CD8-positive, alpha-beta T cell (primary cell): ENCODE measurements at regions of chr1 and their contacts with region 1.

Region 1: DNA sequence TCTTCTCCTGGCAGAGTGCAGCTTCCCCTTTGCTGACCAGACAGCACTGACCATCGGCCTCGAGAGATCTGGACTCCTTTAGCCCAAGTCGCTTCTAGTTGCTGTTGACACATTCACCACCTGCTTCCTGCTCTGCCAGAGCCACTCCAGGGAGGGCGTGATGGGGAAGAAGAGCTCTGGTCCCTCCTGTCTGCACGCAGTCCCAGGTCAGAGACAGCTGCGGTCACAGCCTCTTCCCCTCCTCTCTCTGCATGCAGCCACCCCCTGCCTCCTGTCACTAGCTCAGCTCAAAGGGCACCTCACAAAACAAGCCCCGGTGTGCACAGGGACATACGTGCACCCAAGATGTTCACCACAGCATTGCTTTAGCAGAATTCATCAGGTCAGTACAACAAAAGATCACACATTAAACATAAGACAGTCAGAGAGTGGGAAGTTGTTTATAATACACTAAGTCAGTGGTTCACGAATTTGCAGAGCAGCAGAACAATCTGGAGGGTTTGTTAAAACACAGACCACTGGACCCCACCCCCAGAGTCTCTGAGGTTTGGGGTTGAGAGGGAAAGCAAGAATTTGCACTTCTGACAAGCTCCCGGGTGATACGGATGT is 132.9 kb downstream of the SYF2 start:
- DNase-seq: peak; percentile 8 to 82 (median 52)
- ATAC-seq: peak; percentile 50
- H3K4me3 ChIP-seq: peak overlapping the region; percentile 21 to 32
- H3K4me3 Mint-ChIP-seq: peak overlapping the region; percentile 71
- H3K27ac ChIP-seq: peak overlapping the region; percentile 19 to 60
- H3K27ac Mint-ChIP-seq: peak overlapping the region; percentile 86
- H3K4me1 ChIP-seq: peaks cover 73% of the 10 kb centered on the region
- H3K4me1 Mint-ChIP-seq: peaks cover 74% of the 10 kb centered on the region
- H3K27me3 ChIP-seq: no peaks in the 10 kb centered on the region
- H3K27me3 Mint-ChIP-seq: no peaks in the 10 kb centered on the region
- CTCF ChIP-seq: no peak

Region 2: GRCh38 chr1:24769656-24770651 is 329.5 kb before region 1 on chr1:
- CTCF ChIA-PET with region 1: no interaction called
- POLR2A ChIA-PET with region 1: no interaction called
- intact Hi-C with region 1: no loop called
- DNase-seq: no peak
- ATAC-seq: no peak
- H3K4me3 ChIP-seq: no peak overlapping the region
- H3K4me3 Mint-ChIP-seq: no peak overlapping the region
- H3K27ac ChIP-seq: no peak overlapping the region
- H3K27ac Mint-ChIP-seq: no peak overlapping the region
- H3K4me1 ChIP-seq: no peaks in the 10 kb centered on the region
- H3K4me1 Mint-ChIP-seq: no peaks in the 10 kb centered on the region
- H3K27me3 ChIP-seq: no peaks in the 10 kb centered on the region
- H3K27me3 Mint-ChIP-seq: no peaks in the 10 kb centered on the region
- CTCF ChIP-seq: no peak

Region 3: GRCh38 chr1:24847995-24848881 is 251.2 kb before region 1 on chr1:
- CTCF ChIA-PET with region 1: interaction called, 41 read pairs
- POLR2A ChIA-PET with region 1: interaction called, 3 read pairs
- intact Hi-C with region 1: loop called (anchors 1 kb)
- DNase-seq: peak; percentile 82 to 96 (median 91)
- ATAC-seq: peak; percentile 92
- H3K4me3 ChIP-seq: peak overlapping the region; percentile 44 to 58
- H3K4me3 Mint-ChIP-seq: peak overlapping the region; percentile 63
- H3K27ac ChIP-seq: peak overlapping the region; percentile 11 to 63
- H3K27ac Mint-ChIP-seq: peak overlapping the region; percentile 79
- H3K4me1 ChIP-seq: peaks cover 19% of the 10 kb centered on the region
- H3K4me1 Mint-ChIP-seq: peaks cover 16% of the 10 kb centered on the region
- H3K27me3 ChIP-seq: no peaks in the 10 kb centered on the region
- H3K27me3 Mint-ChIP-seq: no peaks in the 10 kb centered on the region
- CTCF ChIP-seq: peak; percentile 84

Region 4: DNA sequence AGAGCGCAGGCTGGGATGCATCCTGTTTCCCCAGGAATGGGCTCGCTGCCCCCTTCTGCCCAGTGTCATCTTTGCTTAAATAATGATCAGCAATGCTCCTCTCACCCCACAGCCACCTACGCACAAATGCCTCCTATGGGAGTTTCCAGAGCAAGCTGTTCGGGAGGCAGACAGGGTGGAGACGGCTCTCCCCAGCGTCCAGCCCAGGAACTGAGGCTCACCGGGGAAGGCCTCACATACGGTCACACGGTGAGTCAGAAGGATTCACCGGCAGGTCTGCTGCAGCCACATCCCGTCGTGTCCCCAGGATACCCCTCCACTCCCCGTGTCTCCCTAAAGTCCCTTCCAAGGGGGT is 129.1 kb before region 1 on chr1:
- CTCF ChIA-PET with region 1: interaction called, 53 read pairs
- POLR2A ChIA-PET with region 1: interaction called, 17 read pairs
- intact Hi-C with region 1: no loop called
- DNase-seq: peak in 1 of 9 experiments; percentile 11
- ATAC-seq: no peak
- H3K4me3 ChIP-seq: peak overlapping the region in 1 of 2 experiments; percentile 20
- H3K4me3 Mint-ChIP-seq: peak overlapping the region; percentile 35
- H3K27ac ChIP-seq: peak overlapping the region in 1 of 2 experiments; percentile 23
- H3K27ac Mint-ChIP-seq: peak overlapping the region; percentile 95
- H3K4me1 ChIP-seq: peaks cover 66% of the 10 kb centered on the region
- H3K4me1 Mint-ChIP-seq: peaks cover 65% of the 10 kb centered on the region
- H3K27me3 ChIP-seq: peaks cover 0 to 2% of the 10 kb centered on the region in 2 experiments
- H3K27me3 Mint-ChIP-seq: no peaks in the 10 kb centered on the region
- CTCF ChIP-seq: no peak

Region 5: GRCh38 chr1:25042331-25043227 is 56.9 kb before region 1 on chr1:
- CTCF ChIA-PET with region 1: interaction called, 86 read pairs
- POLR2A ChIA-PET with region 1: interaction called, 7 read pairs
- intact Hi-C with region 1: loop called (anchors 2 to 5 kb)
- DNase-seq: peak in 1 of 9 experiments; percentile 36
- ATAC-seq: peak; percentile 29
- H3K4me3 ChIP-seq: no peak overlapping the region
- H3K4me3 Mint-ChIP-seq: no peak overlapping the region
- H3K27ac ChIP-seq: no peak overlapping the region
- H3K27ac Mint-ChIP-seq: peak overlapping the region; percentile 10
- H3K4me1 ChIP-seq: peaks cover 21% of the 10 kb centered on the region
- H3K4me1 Mint-ChIP-seq: peaks cover 28% of the 10 kb centered on the region
- H3K27me3 ChIP-seq: no peaks in the 10 kb centered on the region
- H3K27me3 Mint-ChIP-seq: no peaks in the 10 kb centered on the region
- CTCF ChIP-seq: no peak

Region 6: DNA sequence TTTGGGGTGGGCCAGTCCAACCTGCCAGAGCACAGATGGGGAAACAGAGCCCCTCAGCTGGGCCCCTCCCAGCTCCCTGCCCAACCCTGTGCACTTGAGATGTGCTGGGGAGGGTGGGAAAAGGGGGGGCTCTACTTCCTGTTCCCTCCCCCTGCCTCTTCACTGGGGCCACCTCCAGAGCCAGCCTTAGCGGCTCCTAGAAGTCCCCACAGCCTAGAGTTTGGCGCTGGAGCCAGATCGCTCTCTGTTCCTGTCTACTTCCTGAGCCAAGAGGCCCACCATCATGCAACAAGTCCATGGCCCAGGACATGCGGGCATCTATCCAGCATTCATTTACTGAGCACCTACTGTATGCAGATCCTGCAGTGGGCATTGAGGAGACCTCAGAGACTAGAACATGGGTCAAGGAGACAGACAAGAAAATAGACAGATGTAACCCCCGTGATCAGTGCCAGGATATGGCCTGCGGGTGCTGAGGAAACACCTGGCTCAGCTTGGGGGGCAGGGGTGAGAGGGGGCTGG is 11.2 kb before region 1 on chr1:
- CTCF ChIA-PET with region 1: interaction called, 18 read pairs
- POLR2A ChIA-PET with region 1: interaction called, 4 read pairs
- intact Hi-C with region 1: no loop called
- DNase-seq: peak in 1 of 9 experiments; percentile 18
- ATAC-seq: no peak
- H3K4me3 ChIP-seq: no peak overlapping the region
- H3K4me3 Mint-ChIP-seq: no peak overlapping the region
- H3K27ac ChIP-seq: no peak overlapping the region
- H3K27ac Mint-ChIP-seq: no peak overlapping the region
- H3K4me1 ChIP-seq: peaks cover 8% of the 10 kb centered on the region
- H3K4me1 Mint-ChIP-seq: peaks cover 9% of the 10 kb centered on the region
- H3K27me3 ChIP-seq: no peaks in the 10 kb centered on the region
- H3K27me3 Mint-ChIP-seq: no peaks in the 10 kb centered on the region
- CTCF ChIP-seq: no peak

Region 7: GRCh38 chr1:25204797-25205480 is 105.5 kb after region 1 on chr1:
- CTCF ChIA-PET with region 1: interaction called, 7 read pairs
- POLR2A ChIA-PET with region 1: no interaction called
- intact Hi-C with region 1: loop called in 1 of 2 experiments (anchors 2 kb)
- DNase-seq: peak in 5 of 9 experiments; percentile 13 to 73 (median 50)
- ATAC-seq: peak; percentile 70
- H3K4me3 ChIP-seq: no peak overlapping the region
- H3K4me3 Mint-ChIP-seq: no peak overlapping the region
- H3K27ac ChIP-seq: no peak overlapping the region
- H3K27ac Mint-ChIP-seq: no peak overlapping the region
- H3K4me1 ChIP-seq: no peaks in the 10 kb centered on the region
- H3K4me1 Mint-ChIP-seq: peaks cover 2% of the 10 kb centered on the region
- H3K27me3 ChIP-seq: no peaks in the 10 kb centered on the region
- H3K27me3 Mint-ChIP-seq: peaks cover 10% of the 10 kb centered on the region
- CTCF ChIP-seq: peak; percentile 85